CD4-positive, alpha-beta memory T cell (primary cell): ENCODE measurements at regions of chr22 and their contacts with region 1.

Region 1: DNA sequence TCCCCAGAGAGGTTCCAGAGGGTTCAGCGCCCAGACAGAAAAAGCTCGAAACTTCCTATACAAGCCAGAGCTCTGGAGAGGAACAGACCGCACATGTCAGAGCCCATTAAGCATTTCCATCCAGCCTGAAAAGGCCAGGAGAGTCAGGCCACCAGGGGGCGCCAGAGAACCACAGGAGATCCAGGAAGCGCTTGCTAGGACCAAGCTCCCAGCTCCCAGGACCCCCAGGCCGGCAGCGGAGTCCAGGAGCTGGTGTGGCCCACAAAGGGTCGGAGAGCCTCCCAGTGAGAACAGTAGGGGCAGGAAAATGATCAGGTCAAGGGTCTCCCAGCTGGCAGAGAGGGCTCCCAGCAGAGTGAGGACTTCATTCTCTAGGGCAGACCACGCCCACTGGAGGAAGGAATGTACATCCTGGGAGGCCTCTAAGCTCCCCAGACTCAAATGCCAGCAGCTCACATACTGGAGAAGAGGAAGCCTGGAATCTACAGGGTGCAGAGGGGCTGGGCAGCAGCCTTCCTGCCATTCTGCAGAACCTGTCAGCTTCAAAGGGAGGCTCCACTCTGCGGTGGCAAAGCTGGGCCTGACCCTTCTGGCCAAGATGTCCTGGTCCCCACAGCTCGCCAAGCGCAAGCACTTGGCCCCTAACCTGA is 2.1 kb upstream of the MEI1 start:
- DNase-seq: peak; percentile 81 to 87 (median 83)
- H3K4me3 ChIP-seq: no peak overlapping the region
- H3K4me3 Mint-ChIP-seq: peak overlapping the region; percentile 50 to 84 (median 74)
- H3K27ac ChIP-seq: peak overlapping the region; percentile 2
- H3K27ac Mint-ChIP-seq: peak overlapping the region in 6 of 7 donors; percentile 51 to 88 (median 80)
- H3K4me1 ChIP-seq: peaks cover 14% of the 10 kb centered on the region
- H3K4me1 Mint-ChIP-seq: peaks cover 9 to 21% (median 13%) of the 10 kb centered on the region in 4 donors
- H3K27me3 ChIP-seq: no peaks in the 10 kb centered on the region
- H3K27me3 Mint-ChIP-seq: no peaks in the 10 kb centered on the region

Region 2: GRCh38 chr22:41713004-41713403 is 15.8 kb after region 1 on chr22:
- CTCF ChIA-PET with region 1: interaction called, 23 read pairs
- POLR2A ChIA-PET with region 1: interaction called, 3 read pairs
- intact Hi-C with region 1: no loop called
- DNase-seq: no peak
- H3K4me3 ChIP-seq: no peak overlapping the region
- H3K4me3 Mint-ChIP-seq: no peak overlapping the region
- H3K27ac ChIP-seq: no peak overlapping the region
- H3K27ac Mint-ChIP-seq: no peak overlapping the region
- H3K4me1 ChIP-seq: no peaks in the 10 kb centered on the region
- H3K4me1 Mint-ChIP-seq: no peaks in the 10 kb centered on the region
- H3K27me3 ChIP-seq: no peaks in the 10 kb centered on the region
- H3K27me3 Mint-ChIP-seq: no peaks in the 10 kb centered on the region

Region 3: DNA sequence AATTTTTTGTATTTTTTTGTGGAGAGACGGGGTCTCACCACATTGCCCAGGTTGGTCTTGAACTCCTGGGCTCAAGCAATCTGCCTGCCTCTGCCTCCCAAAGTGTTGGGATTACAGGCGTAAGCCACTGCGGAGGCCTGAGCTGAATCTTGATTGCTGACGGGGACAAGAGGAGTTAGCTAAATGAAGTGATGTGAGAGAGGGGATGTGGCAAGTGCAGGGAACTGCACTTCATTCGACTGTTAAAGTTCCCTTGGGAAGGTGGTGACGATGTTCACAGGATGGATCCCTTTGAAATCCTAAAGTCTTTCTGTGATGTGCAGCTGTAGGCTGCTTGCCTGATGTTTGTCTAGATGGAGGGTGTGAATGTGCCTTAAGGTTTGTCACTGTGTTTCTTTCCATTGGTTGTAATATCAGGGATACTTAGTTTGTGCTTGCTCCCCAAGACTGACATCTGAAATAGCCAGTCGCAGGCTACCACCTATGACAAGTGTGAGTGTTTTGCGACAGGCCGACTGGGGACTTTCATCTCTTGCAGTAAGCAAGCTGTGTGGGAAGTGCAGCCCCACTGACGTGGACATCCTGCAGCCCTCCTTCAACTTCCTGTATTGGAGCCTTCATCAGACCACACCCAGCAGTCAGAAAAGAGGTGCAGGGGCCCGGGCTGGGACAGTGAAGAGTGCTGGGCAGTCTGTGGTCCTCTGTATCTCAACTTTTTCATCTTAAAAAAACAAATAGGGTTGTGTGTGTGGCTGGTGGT is 83.7 kb after region 1 on chr22:
- CTCF ChIA-PET with region 1: interaction called, 25 read pairs
- POLR2A ChIA-PET with region 1: interaction called, 11 read pairs
- intact Hi-C with region 1: no loop called
- DNase-seq: peak; percentile 90 to 99 (median 95)
- H3K4me3 ChIP-seq: peak overlapping the region; percentile 88 to 92
- H3K4me3 Mint-ChIP-seq: peak overlapping the region; percentile 88 to 94 (median 90)
- H3K27ac ChIP-seq: peak overlapping the region; percentile 90
- H3K27ac Mint-ChIP-seq: peak overlapping the region; percentile 92 to 100 (median 99)
- H3K4me1 ChIP-seq: peaks cover 50% of the 10 kb centered on the region
- H3K4me1 Mint-ChIP-seq: peaks cover 29 to 53% (median 40%) of the 10 kb centered on the region in 4 donors
- H3K27me3 ChIP-seq: no peaks in the 10 kb centered on the region
- H3K27me3 Mint-ChIP-seq: no peaks in the 10 kb centered on the region

Region 4: GRCh38 chr22:41857155-41857859 is 160.1 kb after region 1 on chr22:
- CTCF ChIA-PET with region 1: interaction called, 36 read pairs
- POLR2A ChIA-PET with region 1: interaction called, 3 read pairs
- intact Hi-C with region 1: loop called (anchors 1 kb)
- DNase-seq: peak; percentile 71 to 89 (median 72)
- H3K4me3 ChIP-seq: no peak overlapping the region
- H3K4me3 Mint-ChIP-seq: peak overlapping the region in 7 of 8 donors; percentile 0 to 64 (median 47)
- H3K27ac ChIP-seq: peak overlapping the region; percentile 40
- H3K27ac Mint-ChIP-seq: peak overlapping the region; percentile 71 to 96 (median 86)
- H3K4me1 ChIP-seq: peaks cover 53% of the 10 kb centered on the region
- H3K4me1 Mint-ChIP-seq: peaks cover 29 to 59% (median 44%) of the 10 kb centered on the region in 4 donors
- H3K27me3 ChIP-seq: no peaks in the 10 kb centered on the region
- H3K27me3 Mint-ChIP-seq: no peaks in the 10 kb centered on the region

Region 5: GRCh38 chr22:41946629-41947423 is 249.6 kb after region 1 on chr22 and contains the start of gene CENPM:
- CTCF ChIA-PET with region 1: interaction called, 143 read pairs
- POLR2A ChIA-PET with region 1: interaction called, 4 read pairs
- intact Hi-C with region 1: no loop called
- DNase-seq: peak; percentile 84 to 88 (median 86)
- H3K4me3 ChIP-seq: peak within 1 kb of the TSS; percentile 84 to 87
- H3K4me3 Mint-ChIP-seq: peak within 1 kb of the TSS; percentile 89 to 97 (median 92)
- H3K27ac ChIP-seq: peak within 1 kb of the TSS; percentile 53
- H3K27ac Mint-ChIP-seq: peak within 1 kb of the TSS; percentile 82 to 94 (median 89)
- H3K4me1 ChIP-seq: peaks cover 14% of the 10 kb centered on the region
- H3K4me1 Mint-ChIP-seq: peaks cover 4 to 29% (median 12%) of the 10 kb centered on the region in 4 donors
- H3K27me3 ChIP-seq: no peaks in the 10 kb centered on the region
- H3K27me3 Mint-ChIP-seq: no peaks in the 10 kb centered on the region
- total RNA-seq, gene CENPM: 7.6 to 12.0 TPM

Region 6: GRCh38 chr22:41998361-41999275 is 301.4 kb after region 1 on chr22 and contains the start of gene WBP2NL:
- CTCF ChIA-PET with region 1: no interaction called
- POLR2A ChIA-PET with region 1: no interaction called
- intact Hi-C with region 1: no loop called
- DNase-seq: peak; percentile 90 to 92 (median 92)
- H3K4me3 ChIP-seq: peak within 1 kb of the TSS; percentile 6 to 74
- H3K4me3 Mint-ChIP-seq: peak within 1 kb of the TSS; percentile 93 to 99 (median 98)
- H3K27ac ChIP-seq: peak within 1 kb of the TSS; percentile 61
- H3K27ac Mint-ChIP-seq: peak within 1 kb of the TSS; percentile 67 to 100 (median 98)
- H3K4me1 ChIP-seq: peaks cover 21% of the 10 kb centered on the region
- H3K4me1 Mint-ChIP-seq: peaks cover 13 to 35% (median 19%) of the 10 kb centered on the region in 4 donors
- H3K27me3 ChIP-seq: no peaks in the 10 kb centered on the region
- H3K27me3 Mint-ChIP-seq: no peaks in the 10 kb centered on the region
- total RNA-seq, gene WBP2NL: 3.5 to 5.4 TPM